Activated B cell treated with CpG ODN at 0.5 μM for 24 hours (primary cell): ENCODE measurements at regions of chr18 and their contacts with region 1.

Region 1: DNA sequence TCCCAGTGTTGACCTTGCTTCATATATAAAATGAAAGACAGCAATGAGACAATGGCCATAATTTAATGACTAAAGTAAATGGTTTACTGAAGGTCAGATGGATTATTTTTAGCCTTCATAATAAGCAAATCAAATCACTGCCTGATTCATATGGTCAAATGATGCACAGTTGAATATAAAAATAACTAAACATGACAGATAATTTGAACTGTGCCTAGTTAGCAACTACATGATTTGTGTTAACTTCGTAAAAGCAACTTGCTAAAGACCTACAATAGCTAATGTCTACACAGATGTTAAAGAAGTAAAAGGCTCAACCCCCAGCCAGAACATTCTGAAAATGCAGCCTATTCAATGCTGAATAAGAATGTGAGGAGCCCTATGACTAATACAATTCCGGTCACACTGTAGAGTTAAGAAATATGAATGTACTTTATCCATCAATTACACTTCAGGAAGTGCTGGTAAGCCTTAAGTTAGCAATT is 590.8 kb upstream of the CDH2 start:
- DNase-seq: no peak
- ATAC-seq: no peak
- H3K4me3 Mint-ChIP-seq: no peak overlapping the region
- H3K27ac Mint-ChIP-seq: no peak overlapping the region
- H3K4me1 Mint-ChIP-seq: no peaks in the 10 kb centered on the region
- H3K27me3 Mint-ChIP-seq: no peaks in the 10 kb centered on the region
- CTCF ChIP-seq: no peak

Region 2: GRCh38 chr18:28716333-28716732 is 51.4 kb before region 1 on chr18:
- CTCF ChIA-PET with region 1: no interaction called
- POLR2A ChIA-PET with region 1: no interaction called
- intact Hi-C with region 1: loop called (anchors 10 kb)
- DNase-seq: no peak
- ATAC-seq: no peak
- H3K4me3 Mint-ChIP-seq: no peak overlapping the region
- H3K27ac Mint-ChIP-seq: no peak overlapping the region
- H3K4me1 Mint-ChIP-seq: no peaks in the 10 kb centered on the region
- H3K27me3 Mint-ChIP-seq: no peaks in the 10 kb centered on the region
- CTCF ChIP-seq: no peak

Region 3: GRCh38 chr18:29198834-29199233 is 431.1 kb after region 1 on chr18:
- CTCF ChIA-PET with region 1: no interaction called
- POLR2A ChIA-PET with region 1: no interaction called
- intact Hi-C with region 1: no loop called
- DNase-seq: no peak
- ATAC-seq: no peak
- H3K4me3 Mint-ChIP-seq: no peak overlapping the region
- H3K27ac Mint-ChIP-seq: no peak overlapping the region
- H3K4me1 Mint-ChIP-seq: no peaks in the 10 kb centered on the region
- H3K27me3 Mint-ChIP-seq: no peaks in the 10 kb centered on the region
- CTCF ChIP-seq: no peak